Activated CD4-positive, alpha-beta T cell treated with anti-CD3 and anti-CD28 coated beads for 36 hours (primary cell): ENCODE measurements at regions of chr11 and their contacts with region 1.

Region 1: GRCh38 chr11:131674051-131674755 is 303.8 kb downstream of the NTM start:
- DNase-seq: peak; percentile 79
- ATAC-seq: peak; percentile 42
- H3K4me3 Mint-ChIP-seq: no peak overlapping the region
- H3K27ac Mint-ChIP-seq: no peak overlapping the region
- H3K4me1 Mint-ChIP-seq: no peaks in the 10 kb centered on the region
- H3K27me3 Mint-ChIP-seq: peaks cover 2% of the 10 kb centered on the region

Region 2: DNA sequence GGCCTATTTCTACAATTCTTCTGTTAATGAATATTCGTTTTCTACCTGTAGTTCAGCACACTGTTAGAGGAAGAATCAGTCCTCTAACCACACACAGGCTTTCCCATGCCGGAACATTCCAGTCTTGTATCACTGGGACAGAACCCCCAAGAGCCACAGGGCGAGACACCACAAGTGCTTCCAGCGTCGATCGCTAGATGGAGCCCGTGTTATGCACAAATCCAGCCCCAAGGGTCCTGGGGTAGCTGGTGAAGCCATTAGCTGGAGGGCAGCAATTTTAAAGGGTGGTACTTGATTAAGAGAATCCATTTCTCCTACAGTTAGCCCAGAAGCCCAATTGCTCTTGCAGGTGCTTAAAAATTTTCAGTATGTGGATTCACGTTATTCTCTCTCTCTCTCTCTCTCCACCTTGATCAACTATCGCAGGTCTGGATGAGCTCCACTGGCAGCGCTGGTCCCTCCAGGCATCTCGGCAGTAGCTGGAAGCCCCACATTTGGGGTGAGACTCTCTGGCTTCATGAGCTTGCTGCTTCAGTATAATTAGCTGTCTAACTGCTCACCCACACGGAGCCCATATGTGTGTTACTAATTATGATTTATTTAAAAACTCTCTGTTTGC is 609.7 kb before region 1 on chr11:
- CTCF ChIA-PET with region 1: interaction called, 21 read pairs
- POLR2A ChIA-PET with region 1: no interaction called
- intact Hi-C with region 1: loop called (anchors 1 kb)
- DNase-seq: peak; percentile 57
- ATAC-seq: no peak
- H3K4me3 Mint-ChIP-seq: no peak overlapping the region
- H3K27ac Mint-ChIP-seq: no peak overlapping the region
- H3K4me1 Mint-ChIP-seq: no peaks in the 10 kb centered on the region
- H3K27me3 Mint-ChIP-seq: peaks cover 18% of the 10 kb centered on the region

Region 3: GRCh38 chr11:131246663-131247062 is 427.5 kb before region 1 on chr11:
- CTCF ChIA-PET with region 1: interaction called, 3 read pairs
- POLR2A ChIA-PET with region 1: no interaction called
- intact Hi-C with region 1: loop called (anchors 5 kb)
- DNase-seq: peak; percentile 35
- ATAC-seq: no peak
- H3K4me3 Mint-ChIP-seq: no peak overlapping the region
- H3K27ac Mint-ChIP-seq: no peak overlapping the region
- H3K4me1 Mint-ChIP-seq: no peaks in the 10 kb centered on the region
- H3K27me3 Mint-ChIP-seq: peaks cover 20% of the 10 kb centered on the region

Region 4: GRCh38 chr11:131370090-131370751 is 304.0 kb before region 1 on chr11 and contains the start of gene NTM:
- CTCF ChIA-PET with region 1: no interaction called
- POLR2A ChIA-PET with region 1: no interaction called
- intact Hi-C with region 1: no loop called
- DNase-seq: no peak
- ATAC-seq: no peak
- H3K4me3 Mint-ChIP-seq: no peak within 1 kb of the TSS
- H3K27ac Mint-ChIP-seq: no peak within 1 kb of the TSS
- H3K4me1 Mint-ChIP-seq: no peaks in the 10 kb centered on the region
- H3K27me3 Mint-ChIP-seq: peaks cover 10% of the 10 kb centered on the region
- total RNA-seq, gene NTM: not detected

Region 5: GRCh38 chr11:131408025-131408640 is 266.1 kb before region 1 on chr11:
- CTCF ChIA-PET with region 1: interaction called, 3 read pairs
- POLR2A ChIA-PET with region 1: no interaction called
- intact Hi-C with region 1: loop called in 1 of 2 experiments (anchors 5 kb)
- DNase-seq: peak; percentile 16
- ATAC-seq: no peak
- H3K4me3 Mint-ChIP-seq: no peak overlapping the region
- H3K27ac Mint-ChIP-seq: no peak overlapping the region
- H3K4me1 Mint-ChIP-seq: no peaks in the 10 kb centered on the region
- H3K27me3 Mint-ChIP-seq: no peaks in the 10 kb centered on the region

Region 6: GRCh38 chr11:131579932-131580387 is 94.2 kb before region 1 on chr11:
- CTCF ChIA-PET with region 1: interaction called, 5 read pairs
- POLR2A ChIA-PET with region 1: no interaction called
- intact Hi-C with region 1: loop called (anchors 5 kb)
- DNase-seq: peak; percentile 6
- ATAC-seq: no peak
- H3K4me3 Mint-ChIP-seq: no peak overlapping the region
- H3K27ac Mint-ChIP-seq: no peak overlapping the region
- H3K4me1 Mint-ChIP-seq: no peaks in the 10 kb centered on the region
- H3K27me3 Mint-ChIP-seq: peaks cover 7% of the 10 kb centered on the region

Region 7: DNA sequence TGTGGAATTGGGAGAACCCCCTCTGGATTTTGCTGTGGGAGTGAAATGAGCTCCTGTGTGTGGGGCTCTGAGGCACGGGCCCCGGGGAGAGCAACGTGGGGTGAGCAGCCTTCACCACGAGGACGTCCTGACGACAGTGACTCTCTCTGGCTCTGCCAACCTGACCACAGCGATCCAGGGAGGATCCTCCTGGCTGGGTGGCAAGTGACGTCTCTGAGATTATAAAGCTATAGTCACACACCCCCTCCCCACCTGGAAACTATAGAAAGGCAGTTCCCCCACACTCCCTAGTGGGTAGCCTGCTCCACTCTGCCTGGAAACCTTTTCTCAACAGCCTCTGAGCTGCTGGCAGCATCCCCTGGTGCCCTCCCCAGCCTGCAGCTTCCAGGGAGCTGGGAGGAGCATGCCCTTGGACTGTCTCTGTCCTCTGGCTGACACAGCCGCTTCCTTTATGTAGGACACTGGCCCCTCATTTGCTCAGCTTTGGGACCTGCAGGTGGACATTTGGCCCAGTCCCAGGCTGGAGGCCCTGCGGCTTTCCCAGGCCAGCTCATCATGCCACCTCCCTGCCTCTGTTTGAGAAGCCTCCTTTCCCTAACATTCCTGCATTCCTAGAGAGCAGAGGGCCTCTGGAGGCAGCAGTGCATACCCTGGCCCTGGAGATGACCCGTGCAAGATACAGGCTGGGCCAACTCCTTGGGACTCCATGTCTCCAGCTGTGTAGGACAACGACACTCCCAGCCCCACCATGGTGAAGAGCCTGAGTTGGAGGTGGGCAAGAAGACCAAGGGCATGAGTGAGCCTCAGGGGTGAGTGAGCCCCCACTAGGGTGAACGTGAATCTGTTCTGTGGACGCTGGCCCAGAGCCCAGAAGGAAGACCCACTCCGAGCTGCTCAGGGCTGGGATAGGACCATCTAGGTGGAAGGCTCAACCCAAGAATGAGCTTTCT is 10.2 kb after region 1 on chr11:
- CTCF ChIA-PET with region 1: interaction called, 14 read pairs
- POLR2A ChIA-PET with region 1: no interaction called
- intact Hi-C with region 1: no loop called
- DNase-seq: no peak
- ATAC-seq: no peak
- H3K4me3 Mint-ChIP-seq: no peak overlapping the region
- H3K27ac Mint-ChIP-seq: no peak overlapping the region
- H3K4me1 Mint-ChIP-seq: no peaks in the 10 kb centered on the region
- H3K27me3 Mint-ChIP-seq: peaks cover 3% of the 10 kb centered on the region